Calu3 (cell line): ENCODE measurements at regions of chr2 and their contacts with region 1.

Region 1: DNA sequence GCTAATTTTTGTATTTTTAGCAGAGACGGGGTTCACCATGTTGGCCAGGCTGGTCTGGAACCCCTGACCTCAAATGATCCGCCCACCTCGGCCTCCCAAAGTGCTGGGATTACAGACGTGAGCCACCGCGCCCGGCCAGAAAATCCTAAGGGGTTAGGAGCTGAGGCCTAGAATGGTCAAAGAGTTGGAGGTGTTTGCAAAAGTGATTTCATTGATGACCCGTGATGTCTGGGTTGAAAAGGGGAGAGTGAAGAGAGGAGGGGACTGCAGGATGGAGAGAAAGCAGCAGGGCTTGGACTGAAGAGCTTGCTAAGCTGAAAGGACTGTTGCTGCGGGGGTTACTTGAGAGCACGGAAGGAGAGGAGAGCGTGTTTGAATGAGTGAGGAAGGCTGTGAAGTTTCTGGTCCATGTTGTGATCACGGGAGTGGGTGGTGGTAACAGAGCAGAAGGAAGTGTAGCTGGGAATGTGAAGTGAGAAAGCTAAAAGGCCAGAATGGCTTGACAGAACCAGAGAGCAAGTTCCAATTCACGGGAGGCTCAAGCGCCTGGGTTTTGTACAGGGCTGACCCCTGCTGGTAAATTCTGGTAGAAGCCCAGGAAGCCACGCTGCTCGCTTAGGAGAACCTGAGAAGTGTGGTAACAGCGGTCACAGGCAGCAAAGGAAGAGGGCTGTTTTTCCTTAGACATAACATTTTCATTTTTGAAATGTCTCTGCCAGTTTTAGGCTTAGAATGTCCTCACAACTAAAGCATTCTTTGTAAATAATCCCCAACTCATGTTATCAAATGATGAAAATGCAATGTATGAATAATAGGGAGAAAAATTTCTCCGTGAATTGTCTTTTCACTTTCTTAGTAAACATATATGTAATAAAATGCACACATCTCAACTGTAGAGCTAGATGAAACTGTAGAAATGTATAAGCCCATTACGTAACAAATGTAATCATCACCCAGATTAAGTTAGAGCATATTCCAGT is 40.5 kb upstream of the ACTR2 start:
- DNase-seq: peak; percentile 84
- H3K4me3 Mint-ChIP-seq: peak overlapping the region; percentile 13
- H3K27ac Mint-ChIP-seq: no peak overlapping the region
- H3K4me1 Mint-ChIP-seq: peaks cover 16% of the 10 kb centered on the region
- H3K27me3 Mint-ChIP-seq: no peaks in the 10 kb centered on the region
- CTCF ChIP-seq: peak; percentile 70

Region 2: DNA sequence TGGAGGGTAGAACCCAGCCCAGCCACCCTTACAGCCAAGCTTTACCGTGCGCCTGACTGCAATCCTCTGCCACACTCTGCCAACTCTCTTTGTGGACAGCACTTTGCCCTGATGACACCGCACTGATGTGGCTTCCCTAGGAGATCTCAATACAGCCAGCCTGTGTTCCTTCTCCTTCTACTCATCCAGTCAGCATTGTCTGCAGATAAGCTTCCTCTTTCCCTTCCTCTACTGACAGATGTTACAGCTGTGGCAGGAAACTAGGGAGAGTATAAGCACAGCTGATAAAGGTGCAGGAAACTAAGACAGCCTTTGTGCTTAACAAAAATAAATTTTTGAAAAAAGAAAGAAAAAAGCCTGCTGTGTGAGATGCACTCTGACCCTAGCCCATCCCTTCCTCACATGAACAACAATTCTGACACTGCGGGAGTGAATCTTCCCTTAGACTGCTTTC is 105.9 kb before region 1 on chr2:
- CTCF ChIA-PET with region 1: interaction called, 4 read pairs
- intact Hi-C with region 1: loop called (anchors 5 kb)
- DNase-seq: no peak
- H3K4me3 Mint-ChIP-seq: no peak overlapping the region
- H3K27ac Mint-ChIP-seq: no peak overlapping the region
- H3K4me1 Mint-ChIP-seq: no peaks in the 10 kb centered on the region
- H3K27me3 Mint-ChIP-seq: no peaks in the 10 kb centered on the region
- CTCF ChIP-seq: no peak

Region 3: GRCh38 chr2:65129826-65130663 is 57.1 kb before region 1 on chr2 and contains the start of gene RAB1A:
- CTCF ChIA-PET with region 1: interaction called, 11 read pairs
- intact Hi-C with region 1: no loop called
- DNase-seq: peak; percentile 98
- H3K4me3 Mint-ChIP-seq: peak within 1 kb of the TSS; percentile 89
- H3K27ac Mint-ChIP-seq: peak within 1 kb of the TSS; percentile 98
- H3K4me1 Mint-ChIP-seq: peaks cover 18% of the 10 kb centered on the region
- H3K27me3 Mint-ChIP-seq: no peaks in the 10 kb centered on the region
- CTCF ChIP-seq: peak; percentile 6
- total RNA-seq, gene RAB1A: 141 and 148 TPM in 2 replicates